ENCODE measurements at regions of chr12 and their contacts with region 1.

Region 1: DNA sequence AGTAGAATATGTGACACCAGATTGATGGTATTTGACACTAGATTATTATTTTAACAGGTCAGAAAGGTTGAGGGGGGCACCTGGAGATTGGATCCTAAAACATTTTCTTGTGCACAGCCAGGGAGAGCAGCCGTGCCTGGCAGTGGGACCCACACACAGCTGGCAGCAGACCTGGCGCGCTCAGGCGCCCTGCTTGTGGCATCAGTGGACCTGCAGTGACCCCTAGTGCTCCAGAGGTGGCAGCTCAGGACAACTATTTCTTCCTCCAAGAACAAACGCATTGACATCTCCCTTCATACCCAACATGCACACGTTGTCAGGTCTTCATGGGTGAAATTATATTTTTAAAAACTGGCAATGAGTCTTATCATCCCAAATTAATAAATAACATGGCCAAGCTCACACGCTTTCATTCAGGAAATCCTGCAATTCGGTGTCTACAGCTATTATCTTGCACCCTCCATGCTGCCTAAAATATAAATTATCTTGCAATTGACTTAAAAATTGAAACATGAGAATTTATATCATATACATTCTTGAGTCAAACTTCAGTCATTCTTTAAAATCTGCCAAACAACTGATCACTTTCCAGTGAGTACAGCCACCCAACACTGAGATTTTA is 7.7 kb upstream of the TMEM132D start:
- ATAC-seq: peak in 5 of 8 experiments; percentile 78 to 90 (median 85)
- H3K4me3 ChIP-seq: no peak overlapping the region
- H3K27ac ChIP-seq: no peak overlapping the region
- H3K4me1 ChIP-seq: no peaks in the 10 kb centered on the region

Region 2: DNA sequence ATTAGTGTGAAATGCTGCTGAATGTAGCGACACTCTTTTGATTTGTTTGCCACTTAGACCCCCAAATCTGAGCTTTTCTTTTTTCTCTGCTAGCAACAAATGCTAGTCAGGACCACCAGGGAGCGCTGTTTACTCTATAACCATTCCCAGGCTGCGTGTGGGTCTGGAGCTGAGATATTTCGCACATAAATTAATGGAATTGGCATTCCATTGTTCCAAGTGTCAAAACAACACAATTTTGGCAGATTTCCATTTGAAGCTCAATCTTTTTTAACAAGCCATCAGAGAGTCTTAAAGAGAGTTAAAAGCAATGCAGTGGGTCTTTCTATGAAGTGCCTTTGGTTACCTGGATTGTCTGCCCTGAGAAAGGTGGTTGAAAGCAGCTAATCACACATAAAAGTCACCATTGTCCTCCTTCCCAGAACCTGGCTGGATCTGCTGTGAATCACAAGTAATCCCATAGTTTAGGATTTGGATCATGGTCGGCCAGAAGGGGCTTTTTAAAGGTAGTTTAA is 1651.9 kb before region 1 on chr12:
- in situ Hi-C with region 1: loop called in 2 of 9 experiments (anchors 25 kb)
- ATAC-seq: peak in 4 of 8 experiments; percentile 53 to 77 (median 62)
- H3K4me3 ChIP-seq: no peak overlapping the region
- H3K27ac ChIP-seq: no peak overlapping the region
- H3K4me1 ChIP-seq: no peaks in the 10 kb centered on the region

Region 3: DNA sequence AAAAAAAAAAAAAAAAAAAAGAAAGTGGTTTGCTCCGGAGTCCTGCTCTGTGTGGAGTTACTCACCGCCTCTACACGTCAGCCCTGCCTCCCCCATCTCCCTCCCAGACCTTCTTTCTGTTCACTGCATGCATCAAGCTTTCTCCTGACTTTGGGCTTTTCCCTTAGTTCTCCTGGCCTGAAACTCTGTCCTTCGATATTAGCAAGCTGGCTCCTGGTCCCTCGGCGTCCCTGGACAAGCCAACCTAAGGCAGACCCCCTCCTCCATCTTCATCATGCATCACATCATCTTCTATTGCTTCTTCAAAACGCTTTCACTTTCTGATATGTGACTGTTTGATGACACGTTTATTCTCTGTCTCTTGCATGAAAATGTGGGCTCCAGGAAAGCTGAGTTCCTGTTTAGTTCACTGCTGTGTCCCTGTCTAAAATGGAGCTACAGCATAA is 1128.4 kb before region 1 on chr12:
- in situ Hi-C with region 1: loop called in 1 of 9 experiments (anchors 25 kb)
- ATAC-seq: peak in 2 of 8 experiments; percentile 32 to 47
- H3K4me3 ChIP-seq: no peak overlapping the region
- H3K27ac ChIP-seq: no peak overlapping the region
- H3K4me1 ChIP-seq: no peaks in the 10 kb centered on the region

Region 4: DNA sequence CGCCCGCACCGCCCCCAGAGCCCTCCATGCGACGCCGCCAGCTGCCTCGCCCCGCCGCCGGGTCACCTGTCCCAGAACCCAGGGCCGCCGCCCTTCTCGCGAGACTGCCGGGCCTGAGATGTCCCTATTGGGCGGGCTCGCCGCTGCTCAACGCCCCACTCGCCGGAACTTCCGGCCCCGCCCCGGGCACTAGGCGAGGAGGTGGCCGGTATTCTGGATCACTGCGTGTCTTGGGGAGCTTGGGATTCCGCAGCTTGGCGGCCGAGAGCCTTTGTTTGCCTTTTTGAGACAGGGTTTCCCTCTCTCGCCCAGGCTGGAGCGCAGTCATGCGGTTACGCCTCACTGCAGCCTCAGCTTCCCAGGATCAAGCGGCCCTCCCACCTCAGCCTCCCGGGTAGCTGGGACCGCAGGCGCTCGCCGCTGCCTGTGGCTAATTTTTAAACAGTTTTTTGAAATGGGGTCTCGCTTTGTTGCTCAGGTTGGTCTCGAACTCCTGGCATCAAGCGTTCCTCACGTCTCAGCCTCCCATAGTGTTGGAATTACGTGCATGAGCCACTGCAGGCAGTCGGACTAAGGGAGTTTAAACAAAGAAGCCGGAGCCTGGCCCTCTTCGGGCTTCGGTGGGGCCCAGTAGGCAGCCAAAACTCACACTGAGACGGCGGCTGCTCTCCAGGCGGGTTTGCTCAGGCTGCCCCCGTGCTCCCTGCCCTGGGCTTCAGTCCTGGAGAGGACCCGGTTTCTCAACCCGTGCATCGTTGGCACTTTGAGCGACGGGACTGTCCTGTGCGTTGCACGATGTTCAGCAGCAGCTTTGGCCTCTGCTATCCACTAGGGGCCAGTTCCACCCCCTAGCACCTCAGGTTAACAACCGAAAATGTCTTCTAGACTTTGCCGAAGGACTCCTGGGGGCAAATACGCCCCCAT is 1087.4 kb before region 1 on chr12 and contains the start of gene SLC15A4:
- in situ Hi-C with region 1: loop called in 1 of 9 experiments (anchors 25 kb)
- ATAC-seq: peak; percentile 93 to 98 (median 96)
- H3K4me3 ChIP-seq: peak within 1 kb of the TSS; percentile 50 to 63 (median 56)
- H3K27ac ChIP-seq: peak within 1 kb of the TSS; percentile 90 to 91
- H3K4me1 ChIP-seq: peaks cover 0 to 13% of the 10 kb centered on the region in 2 donors
- total RNA-seq, gene SLC15A4: 1.8 to 13.9 (median 6.6) TPM

Region 5: GRCh38 chr12:128969480-128970055 is 942.0 kb before region 1 on chr12:
- in situ Hi-C with region 1: loop called in 2 of 9 experiments (anchors 10 to 25 kb)
- ATAC-seq: peak in 6 of 8 experiments; percentile 62 to 99 (median 96)
- H3K4me3 ChIP-seq: peak overlapping the region in 1 of 5 donors; percentile 17
- H3K27ac ChIP-seq: no peak overlapping the region
- H3K4me1 ChIP-seq: no peaks in the 10 kb centered on the region

Region 6: DNA sequence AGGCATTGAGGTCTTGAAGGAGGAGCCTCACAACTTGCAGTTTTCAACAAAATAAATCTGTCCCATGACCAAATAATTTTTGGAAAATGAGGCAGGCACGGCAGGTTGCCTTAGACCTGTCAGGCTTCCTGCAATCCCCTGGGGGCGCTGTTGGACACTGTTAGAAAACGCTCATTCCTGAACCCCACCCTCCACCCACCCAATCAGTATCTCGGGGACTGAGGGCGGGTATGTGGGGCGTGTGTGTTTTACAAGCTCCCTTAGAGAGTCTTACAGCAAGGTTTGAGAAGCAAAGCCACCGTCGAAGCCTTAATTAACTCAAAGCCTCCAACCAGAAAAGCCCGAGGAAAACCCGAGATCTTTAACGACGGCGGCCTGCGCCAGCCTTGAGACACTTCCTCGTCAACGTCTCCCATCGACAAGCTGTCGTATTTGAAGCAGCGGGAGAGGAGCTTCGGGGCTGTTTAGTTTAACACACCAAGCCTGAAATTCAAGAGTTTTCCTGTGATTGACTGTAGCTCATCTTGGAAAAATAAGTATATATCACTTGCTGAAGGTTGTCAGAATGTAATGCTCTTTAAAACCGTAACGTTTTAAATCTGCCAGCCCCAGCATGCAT is 935.3 kb before region 1 on chr12:
- in situ Hi-C with region 1: loop called in 3 of 9 experiments (anchors 10 to 25 kb)
- ATAC-seq: peak in 4 of 8 experiments; percentile 37 to 87 (median 70)
- H3K4me3 ChIP-seq: no peak overlapping the region
- H3K27ac ChIP-seq: no peak overlapping the region
- H3K4me1 ChIP-seq: no peaks in the 10 kb centered on the region

Region 7: GRCh38 chr12:129193263-129193871 is 718.2 kb before region 1 on chr12:
- in situ Hi-C with region 1: loop called in 1 of 9 experiments (anchors 25 kb)
- ATAC-seq: no peak
- H3K4me3 ChIP-seq: no peak overlapping the region
- H3K27ac ChIP-seq: no peak overlapping the region
- H3K4me1 ChIP-seq: no peaks in the 10 kb centered on the region

Region 8: GRCh38 chr12:129503802-129504201 is 407.7 kb before region 1 on chr12:
- in situ Hi-C with region 1: no loop called
- ATAC-seq: no peak
- H3K4me3 ChIP-seq: no peak overlapping the region
- H3K27ac ChIP-seq: no peak overlapping the region
- H3K4me1 ChIP-seq: no peaks in the 10 kb centered on the region

Region 9: DNA sequence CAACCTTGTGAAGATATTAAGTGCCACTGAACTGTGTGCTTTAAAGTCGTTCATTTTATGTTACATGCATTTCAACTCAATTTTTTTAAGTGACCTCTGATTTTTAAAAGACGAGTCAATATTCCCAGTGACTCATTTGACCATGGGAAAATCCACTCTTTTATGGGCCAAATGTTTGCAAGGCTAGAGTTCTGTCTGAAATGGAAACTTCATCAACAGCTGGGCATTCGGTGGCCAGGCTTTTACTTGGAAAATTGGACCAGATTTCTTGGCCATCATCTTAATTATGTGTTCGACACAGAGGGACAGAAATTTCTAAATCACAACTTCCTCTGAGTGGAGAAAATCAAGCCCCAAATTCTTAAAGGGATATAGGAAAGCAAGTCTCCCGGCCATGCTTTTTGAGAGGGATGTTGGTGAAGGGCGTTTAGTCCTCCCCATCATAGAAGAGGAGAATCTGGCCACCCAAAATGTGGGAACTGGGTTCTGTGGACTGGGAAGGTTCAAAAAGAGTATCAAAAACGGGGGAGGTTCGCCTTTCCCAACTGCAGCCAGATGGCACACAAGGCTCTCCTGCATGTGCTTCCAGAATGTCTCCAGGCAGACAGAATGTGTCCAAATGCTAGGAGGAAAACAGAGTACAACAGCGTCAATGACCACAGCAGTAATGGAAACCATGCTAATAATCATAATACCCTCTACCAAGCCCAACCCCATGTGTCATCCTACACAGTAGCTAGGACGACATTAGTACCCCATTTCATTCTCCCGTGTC is 209.9 kb after region 1 on chr12:
- in situ Hi-C with region 1: no loop called
- ATAC-seq: no peak
- H3K4me3 ChIP-seq: no peak overlapping the region
- H3K27ac ChIP-seq: no peak overlapping the region
- H3K4me1 ChIP-seq: peaks cover 0 to 8% of the 10 kb centered on the region in 2 donors